CD8-positive, alpha-beta T cell (primary cell): ENCODE measurements at regions of chr3 and their contacts with region 1.

Region 1: DNA sequence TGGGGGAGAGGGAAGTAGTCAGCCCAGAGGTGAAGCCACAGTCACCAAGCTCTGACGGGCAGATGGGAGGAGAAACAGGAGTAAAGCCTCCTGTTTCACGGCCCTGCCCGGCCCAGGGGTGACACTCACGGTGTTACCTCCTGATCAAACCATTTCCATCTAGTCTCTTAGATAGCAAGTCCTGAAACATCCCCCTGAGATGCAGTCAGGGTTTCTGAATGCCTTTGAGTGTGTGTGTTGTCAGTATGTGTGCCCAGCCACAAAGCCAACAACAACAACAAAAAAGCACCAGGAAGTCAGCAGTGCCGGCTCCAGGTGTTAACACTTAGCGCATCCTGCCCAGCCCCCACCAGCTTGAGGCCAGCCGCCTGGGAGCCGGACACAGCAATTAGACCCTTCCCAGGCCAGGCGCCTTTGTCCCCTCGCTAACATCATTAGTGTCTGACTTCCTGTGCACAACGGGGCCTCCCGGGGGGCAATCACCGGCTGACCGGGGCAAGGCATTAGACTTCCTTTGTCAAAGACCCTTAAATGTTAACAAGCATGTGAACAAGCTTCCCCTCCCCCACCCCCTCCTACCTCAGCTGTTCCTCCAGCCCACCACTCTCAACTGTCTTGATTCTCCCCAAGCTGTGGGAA is 34.5 kb downstream of the IL17RD start:
- DNase-seq: peak in 2 of 9 experiments; percentile 4 to 5
- ATAC-seq: no peak
- H3K4me3 ChIP-seq: no peak overlapping the region
- H3K4me3 Mint-ChIP-seq: no peak overlapping the region
- H3K27ac ChIP-seq: no peak overlapping the region
- H3K27ac Mint-ChIP-seq: no peak overlapping the region
- H3K4me1 ChIP-seq: no peaks in the 10 kb centered on the region
- H3K4me1 Mint-ChIP-seq: no peaks in the 10 kb centered on the region
- H3K27me3 ChIP-seq: no peaks in the 10 kb centered on the region
- H3K27me3 Mint-ChIP-seq: peaks cover 2% of the 10 kb centered on the region
- CTCF ChIP-seq: no peak

Region 2: GRCh38 chr3:55198543-55198942 is 1932.1 kb before region 1 on chr3:
- CTCF ChIA-PET with region 1: no interaction called
- POLR2A ChIA-PET with region 1: no interaction called
- intact Hi-C with region 1: no loop called
- DNase-seq: no peak
- ATAC-seq: no peak
- H3K4me3 ChIP-seq: no peak overlapping the region
- H3K4me3 Mint-ChIP-seq: no peak overlapping the region
- H3K27ac ChIP-seq: no peak overlapping the region
- H3K27ac Mint-ChIP-seq: no peak overlapping the region
- H3K4me1 ChIP-seq: no peaks in the 10 kb centered on the region
- H3K4me1 Mint-ChIP-seq: no peaks in the 10 kb centered on the region
- H3K27me3 ChIP-seq: no peaks in the 10 kb centered on the region
- H3K27me3 Mint-ChIP-seq: no peaks in the 10 kb centered on the region
- CTCF ChIP-seq: no peak

Region 3: GRCh38 chr3:56303487-56303886 is 827.2 kb before region 1 on chr3:
- CTCF ChIA-PET with region 1: no interaction called
- POLR2A ChIA-PET with region 1: no interaction called
- intact Hi-C with region 1: loop called in 1 of 2 experiments (anchors 10 kb)
- DNase-seq: peak in 1 of 9 experiments; percentile 10
- ATAC-seq: no peak
- H3K4me3 ChIP-seq: no peak overlapping the region
- H3K4me3 Mint-ChIP-seq: no peak overlapping the region
- H3K27ac ChIP-seq: no peak overlapping the region
- H3K27ac Mint-ChIP-seq: no peak overlapping the region
- H3K4me1 ChIP-seq: no peaks in the 10 kb centered on the region
- H3K4me1 Mint-ChIP-seq: no peaks in the 10 kb centered on the region
- H3K27me3 ChIP-seq: no peaks in the 10 kb centered on the region
- H3K27me3 Mint-ChIP-seq: peaks cover 16% of the 10 kb centered on the region
- CTCF ChIP-seq: peak; percentile 14

Region 4: DNA sequence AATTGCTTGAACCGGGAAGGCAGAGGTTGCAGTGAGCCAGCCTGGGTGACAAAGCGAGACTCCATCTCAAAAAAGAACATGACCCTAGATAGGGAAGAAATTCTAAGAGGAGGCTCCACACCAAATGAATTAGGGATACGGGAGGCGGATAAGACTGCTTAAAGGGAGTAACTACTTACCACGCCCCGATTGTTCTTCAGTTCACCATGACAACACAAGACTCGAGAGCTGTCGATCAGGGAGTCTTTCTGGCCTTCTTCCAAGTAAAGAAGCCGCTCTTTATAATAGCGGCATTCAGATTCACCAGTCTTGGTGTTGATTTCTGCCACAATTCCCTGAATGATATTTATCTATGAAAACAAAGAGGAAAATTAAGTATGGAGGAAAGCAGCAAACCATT is 393.7 kb before region 1 on chr3:
- CTCF ChIA-PET with region 1: no interaction called
- POLR2A ChIA-PET with region 1: no interaction called
- intact Hi-C with region 1: no loop called
- DNase-seq: no peak
- ATAC-seq: no peak
- H3K4me3 ChIP-seq: no peak overlapping the region
- H3K4me3 Mint-ChIP-seq: no peak overlapping the region
- H3K27ac ChIP-seq: peak overlapping the region in 1 of 2 experiments; percentile 14
- H3K27ac Mint-ChIP-seq: peak overlapping the region; percentile 64
- H3K4me1 ChIP-seq: peaks cover 32% of the 10 kb centered on the region
- H3K4me1 Mint-ChIP-seq: peaks cover 49% of the 10 kb centered on the region
- H3K27me3 ChIP-seq: no peaks in the 10 kb centered on the region
- H3K27me3 Mint-ChIP-seq: no peaks in the 10 kb centered on the region
- CTCF ChIP-seq: no peak